Naive thymus-derived CD4-positive, alpha-beta T cell (primary cell): ENCODE measurements at regions of chr11 and their contacts with region 1.

Region 1: DNA sequence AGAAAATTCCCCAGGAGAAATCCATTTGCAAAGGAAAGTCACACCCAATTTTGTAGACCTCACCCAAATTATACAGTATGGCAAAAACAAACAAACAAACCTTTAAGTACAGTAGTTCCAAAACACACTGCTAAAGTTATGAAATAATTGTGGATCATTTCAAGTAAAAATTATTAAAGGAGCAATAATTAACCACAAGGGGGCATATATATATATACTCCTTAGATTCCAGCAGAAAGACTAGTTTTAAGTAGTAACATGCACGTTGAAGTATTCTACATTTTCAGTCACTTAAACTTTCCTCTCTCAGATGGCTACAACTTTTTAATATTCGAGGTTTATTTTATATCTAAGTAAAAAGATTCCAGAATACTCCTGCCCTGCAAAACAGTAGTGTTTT is 26.8 kb downstream of the RNF141 start:
- DNase-seq: peak in 1 of 9 donors; percentile 4
- ATAC-seq: no peak
- H3K4me3 ChIP-seq: no peak overlapping the region
- H3K4me3 Mint-ChIP-seq: no peak overlapping the region
- H3K27ac ChIP-seq: no peak overlapping the region
- H3K27ac Mint-ChIP-seq: peak overlapping the region in 3 of 9 donors; percentile 0 to 48 (median 30)
- H3K4me1 ChIP-seq: no peaks in the 10 kb centered on the region
- H3K4me1 Mint-ChIP-seq: peaks cover 0 to 5% (median 0%) of the 10 kb centered on the region in 7 donors
- H3K27me3 ChIP-seq: no peaks in the 10 kb centered on the region
- H3K27me3 Mint-ChIP-seq: no peaks in the 10 kb centered on the region

Region 2: DNA sequence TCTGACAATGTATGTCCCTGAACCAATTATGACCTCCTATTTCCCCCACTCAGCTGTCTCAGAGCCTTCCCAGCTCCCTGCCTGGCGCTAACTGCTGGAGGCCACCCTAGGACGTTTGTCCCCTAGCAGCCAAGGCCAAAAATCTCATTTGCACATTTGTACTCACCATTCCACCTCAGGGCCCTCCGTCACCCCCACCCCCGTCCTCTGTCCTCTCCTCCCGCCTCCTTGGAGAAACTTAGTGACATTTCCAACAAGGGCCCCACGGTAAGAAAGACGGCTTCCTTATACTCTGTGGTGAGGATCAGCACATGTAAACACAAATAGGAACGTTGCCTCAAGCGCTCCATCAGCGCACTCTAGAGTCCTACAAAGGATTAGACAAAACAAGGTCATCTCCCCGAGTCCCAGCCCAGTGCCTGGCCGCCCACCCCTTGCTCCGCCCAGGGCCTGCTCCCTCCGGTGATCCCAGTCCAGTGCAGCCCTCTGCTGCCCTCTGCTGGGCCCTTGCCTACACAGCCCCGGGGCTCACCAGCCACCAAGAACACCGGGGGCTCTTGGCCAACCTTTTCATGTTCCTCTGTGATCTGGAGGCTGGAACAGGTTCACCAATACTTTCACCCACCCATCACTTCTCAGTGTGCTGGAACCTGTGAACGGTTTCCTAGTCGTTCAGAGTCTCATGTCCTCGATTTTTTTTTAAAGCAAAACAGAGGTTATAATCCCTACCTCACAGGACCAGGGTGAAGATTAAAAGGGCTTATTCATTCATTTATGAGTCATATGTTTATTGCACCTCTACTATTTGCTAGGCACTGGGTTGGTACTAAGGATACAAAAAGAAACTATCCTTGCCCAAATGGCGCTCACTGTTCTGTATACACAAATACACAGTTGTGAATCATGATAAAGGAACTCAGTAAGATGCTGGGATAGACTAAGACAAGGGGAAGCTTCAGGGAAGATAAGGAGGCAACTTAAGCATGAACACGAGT is 221.6 kb after region 1 on chr11:
- CTCF ChIA-PET with region 1: interaction called, 5 read pairs
- POLR2A ChIA-PET with region 1: no interaction called
- intact Hi-C with region 1: loop called in 1 of 2 experiments (anchors 5 kb)
- DNase-seq: peak; percentile 62 to 92 (median 77)
- ATAC-seq: peak; percentile 100
- H3K4me3 ChIP-seq: no peak overlapping the region
- H3K4me3 Mint-ChIP-seq: peak overlapping the region in 8 of 10 donors; percentile 8 to 75 (median 62)
- H3K27ac ChIP-seq: no peak overlapping the region
- H3K27ac Mint-ChIP-seq: peak overlapping the region in 5 of 9 donors; percentile 31 to 71 (median 59)
- H3K4me1 ChIP-seq: peaks cover 0 to 4% of the 10 kb centered on the region in 2 donors
- H3K4me1 Mint-ChIP-seq: peaks cover 5 to 13% (median 8%) of the 10 kb centered on the region in 7 donors
- H3K27me3 ChIP-seq: no peaks in the 10 kb centered on the region
- H3K27me3 Mint-ChIP-seq: peaks cover 4 to 19% (median 12%) of the 10 kb centered on the region in 5 donors